CD8-positive, alpha-beta T cell (primary cell): ENCODE measurements at regions of chr17 and their contacts with region 1.

Region 1: DNA sequence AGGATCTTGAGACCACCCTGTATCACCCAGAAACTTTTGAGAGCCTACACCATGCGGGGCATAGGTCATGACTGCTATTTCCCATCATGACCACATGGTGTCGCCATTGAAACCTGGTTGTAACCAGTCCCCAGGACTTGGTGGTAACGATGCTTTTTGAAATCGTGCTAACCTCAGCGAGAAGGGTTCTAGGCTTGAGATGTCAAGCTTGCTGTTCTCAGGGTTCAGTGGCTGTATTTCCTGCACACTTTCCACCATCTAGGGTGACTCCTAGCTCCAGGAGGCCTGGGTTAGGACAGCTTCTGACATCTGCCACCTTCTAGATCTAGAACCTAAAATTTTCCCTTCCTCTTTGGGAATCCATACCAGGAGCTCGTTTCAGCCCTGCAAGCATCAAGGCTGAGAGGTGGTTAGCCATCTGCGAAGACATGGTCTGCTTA is 13.0 kb upstream of the SPNS3 start:
- DNase-seq: peak in 8 of 9 experiments; percentile 40 to 86 (median 59)
- ATAC-seq: peak; percentile 99
- H3K4me3 ChIP-seq: no peak overlapping the region
- H3K4me3 Mint-ChIP-seq: no peak overlapping the region
- H3K27ac ChIP-seq: no peak overlapping the region
- H3K27ac Mint-ChIP-seq: no peak overlapping the region
- H3K4me1 ChIP-seq: peaks cover 4% of the 10 kb centered on the region
- H3K4me1 Mint-ChIP-seq: peaks cover 3% of the 10 kb centered on the region
- H3K27me3 ChIP-seq: no peaks in the 10 kb centered on the region
- H3K27me3 Mint-ChIP-seq: no peaks in the 10 kb centered on the region
- CTCF ChIP-seq: peak; percentile 85

Region 2: DNA sequence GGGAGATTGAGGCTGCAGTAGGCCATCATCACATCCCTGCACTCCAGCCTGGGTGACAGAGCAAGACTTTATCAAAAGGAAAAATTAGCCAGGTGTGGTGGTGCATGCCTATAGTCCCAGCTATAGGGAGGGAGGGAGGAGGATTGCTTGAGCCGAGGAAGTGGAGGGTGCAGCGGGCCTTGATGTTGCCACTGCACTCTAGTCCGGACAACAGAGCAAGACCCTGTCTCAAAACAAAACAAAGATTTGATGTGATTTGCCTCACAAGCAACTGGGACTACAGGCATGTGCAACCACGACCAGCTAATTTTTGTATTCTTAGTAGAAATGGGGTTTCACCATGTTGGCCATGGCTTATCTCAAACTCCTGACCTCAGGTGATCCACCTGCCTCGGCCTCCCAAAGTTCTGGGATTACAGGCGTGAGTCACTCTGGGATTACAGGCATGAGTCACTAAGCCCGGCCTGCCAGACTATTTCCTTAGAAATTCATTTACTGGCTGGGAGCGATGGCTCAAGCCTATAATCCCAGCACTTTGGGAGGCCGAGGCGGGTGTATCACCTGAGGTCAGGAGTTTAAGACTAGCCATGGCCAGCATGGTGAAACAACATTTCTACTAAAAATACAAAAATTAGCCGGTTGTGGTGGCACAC is 65.7 kb before region 1 on chr17:
- CTCF ChIA-PET with region 1: no interaction called
- POLR2A ChIA-PET with region 1: no interaction called
- intact Hi-C with region 1: no loop called
- DNase-seq: no peak
- ATAC-seq: no peak
- H3K4me3 ChIP-seq: no peak overlapping the region
- H3K4me3 Mint-ChIP-seq: no peak overlapping the region
- H3K27ac ChIP-seq: no peak overlapping the region
- H3K27ac Mint-ChIP-seq: no peak overlapping the region
- H3K4me1 ChIP-seq: peaks cover 49% of the 10 kb centered on the region
- H3K4me1 Mint-ChIP-seq: peaks cover 58% of the 10 kb centered on the region
- H3K27me3 ChIP-seq: no peaks in the 10 kb centered on the region
- H3K27me3 Mint-ChIP-seq: no peaks in the 10 kb centered on the region
- CTCF ChIP-seq: no peak

Region 3: DNA sequence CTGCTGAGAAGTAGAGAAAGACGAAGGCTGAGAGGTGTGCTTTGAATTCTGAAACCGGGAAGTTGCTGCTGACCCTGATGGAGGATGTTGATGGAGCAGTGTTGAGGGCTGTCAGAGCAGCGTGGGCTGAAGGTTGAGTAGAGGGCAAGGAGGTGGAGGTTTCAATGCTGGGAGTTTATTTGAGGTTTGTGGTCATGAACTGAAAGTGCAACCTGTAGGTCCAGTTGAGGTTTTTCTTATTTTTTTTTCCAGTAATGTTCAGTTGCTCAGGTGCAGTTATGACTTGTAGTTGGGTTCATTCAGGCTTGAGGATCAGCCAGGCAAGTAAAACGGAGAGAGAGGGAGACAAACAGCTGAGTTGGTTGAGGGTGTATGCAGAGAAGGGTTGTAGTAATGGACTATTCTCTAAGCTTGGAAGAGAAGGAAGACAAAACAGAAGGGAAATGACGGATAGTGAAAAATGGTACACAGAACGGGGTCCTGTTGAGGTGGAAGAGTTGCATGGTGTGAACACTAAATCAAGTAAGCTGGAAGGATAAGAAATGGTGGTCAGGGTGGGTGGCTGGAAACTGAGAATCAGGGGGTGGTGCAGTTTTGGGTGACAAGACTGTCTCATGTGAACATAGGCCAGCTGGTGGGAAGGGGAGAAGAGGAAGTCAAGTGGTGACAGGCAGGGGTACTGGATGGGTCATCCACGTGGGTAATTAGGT is 45.5 kb before region 1 on chr17:
- CTCF ChIA-PET with region 1: no interaction called
- POLR2A ChIA-PET with region 1: no interaction called
- intact Hi-C with region 1: no loop called
- DNase-seq: peak in 4 of 9 experiments; percentile 3 to 77 (median 36)
- ATAC-seq: peak; percentile 71
- H3K4me3 ChIP-seq: no peak overlapping the region
- H3K4me3 Mint-ChIP-seq: peak overlapping the region; percentile 54
- H3K27ac ChIP-seq: peak overlapping the region in 1 of 2 experiments; percentile 47
- H3K27ac Mint-ChIP-seq: peak overlapping the region; percentile 77
- H3K4me1 ChIP-seq: peaks cover 9% of the 10 kb centered on the region
- H3K4me1 Mint-ChIP-seq: peaks cover 18% of the 10 kb centered on the region
- H3K27me3 ChIP-seq: no peaks in the 10 kb centered on the region
- H3K27me3 Mint-ChIP-seq: no peaks in the 10 kb centered on the region
- CTCF ChIP-seq: no peak

Region 4: DNA sequence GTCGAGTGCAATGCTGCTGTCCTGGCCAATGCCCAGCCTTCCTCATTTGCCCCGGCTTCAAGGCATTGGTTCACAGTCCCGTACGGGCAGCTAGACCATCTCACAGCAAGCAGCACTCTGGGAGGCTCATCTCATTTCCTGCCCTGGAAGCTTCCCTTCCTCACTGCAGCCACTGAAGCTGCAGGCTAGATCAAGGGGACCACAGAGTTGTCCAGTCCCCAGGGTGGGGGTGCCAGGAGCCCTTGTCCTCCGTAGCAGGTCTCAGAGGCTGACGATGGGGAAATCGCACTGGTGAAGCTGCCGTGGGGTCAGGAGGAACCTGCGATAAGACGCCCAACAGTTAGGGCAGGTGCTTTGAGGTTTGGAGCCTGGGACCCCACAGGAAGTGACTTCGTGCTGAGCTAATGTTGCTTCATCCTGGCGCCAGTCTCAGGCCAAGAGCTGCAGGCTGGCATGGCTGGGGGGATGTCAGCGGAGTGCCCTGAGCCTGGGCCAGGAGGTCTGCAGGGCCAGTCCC is 12.9 kb after region 1 on chr17 and contains the start of gene SPNS3:
- CTCF ChIA-PET with region 1: interaction called, 32 read pairs
- POLR2A ChIA-PET with region 1: interaction called, 3 read pairs
- intact Hi-C with region 1: no loop called
- DNase-seq: peak in 8 of 9 experiments; percentile 21 to 76 (median 42)
- ATAC-seq: peak; percentile 77
- H3K4me3 ChIP-seq: peak within 1 kb of the TSS; percentile 37 to 46
- H3K4me3 Mint-ChIP-seq: peak within 1 kb of the TSS; percentile 74
- H3K27ac ChIP-seq: peak within 1 kb of the TSS in 1 of 2 experiments; percentile 43
- H3K27ac Mint-ChIP-seq: peak within 1 kb of the TSS; percentile 84
- H3K4me1 ChIP-seq: peaks cover 25% of the 10 kb centered on the region
- H3K4me1 Mint-ChIP-seq: peaks cover 31% of the 10 kb centered on the region
- H3K27me3 ChIP-seq: peaks cover 0 to 4% of the 10 kb centered on the region in 2 experiments
- H3K27me3 Mint-ChIP-seq: no peaks in the 10 kb centered on the region
- CTCF ChIP-seq: no peak
- total RNA-seq, gene SPNS3: 3.4 TPM

Region 5: DNA sequence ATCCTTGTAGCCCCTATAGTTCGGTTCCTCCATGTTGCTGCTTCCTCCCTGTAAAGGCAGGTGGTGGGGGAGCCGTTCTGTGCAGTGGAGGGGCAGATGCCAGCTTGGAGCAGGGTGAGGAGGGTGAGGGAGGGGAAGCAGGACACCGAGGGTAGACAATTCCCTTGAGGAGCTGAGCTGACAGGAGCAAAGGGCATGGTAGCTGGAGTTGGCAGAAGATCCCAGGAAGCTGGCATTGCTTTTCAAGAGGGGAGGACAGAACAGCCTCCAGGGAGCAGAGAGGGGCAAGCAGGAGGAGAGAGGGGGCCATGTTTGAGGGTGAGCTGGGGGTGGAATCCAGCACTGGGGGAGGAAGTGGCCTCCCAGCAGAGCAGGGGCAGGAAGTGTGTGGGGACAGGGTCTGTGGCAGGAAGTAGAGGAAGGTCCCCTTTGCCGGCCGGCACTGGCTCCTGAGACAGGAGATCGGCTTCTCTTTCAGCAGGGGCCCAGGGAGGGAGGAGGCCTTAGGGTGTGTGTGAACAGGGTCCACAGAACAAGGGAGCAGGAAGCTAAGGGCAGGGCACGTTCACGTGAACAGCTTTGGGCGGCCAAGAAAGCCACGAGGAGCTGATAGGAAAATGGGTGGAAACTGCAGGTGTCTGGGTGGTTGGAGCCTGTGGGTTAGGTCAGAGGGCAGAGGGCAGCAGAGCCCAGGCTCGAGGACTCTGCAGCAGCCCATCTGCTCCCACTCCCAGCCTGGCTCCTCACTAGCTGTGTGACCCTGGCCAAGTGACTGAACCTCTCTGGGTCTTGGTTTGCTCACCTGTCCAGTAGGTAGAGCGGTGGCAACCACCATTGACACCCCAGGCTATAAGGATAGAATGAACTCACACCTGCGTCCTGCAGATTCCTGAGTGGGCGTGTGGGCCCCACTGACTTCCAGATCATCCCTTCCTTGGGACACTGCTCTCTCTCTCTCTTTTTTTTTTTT is 60.5 kb after region 1 on chr17:
- CTCF ChIA-PET with region 1: interaction called, 11 read pairs
- POLR2A ChIA-PET with region 1: no interaction called
- intact Hi-C with region 1: loop called in 1 of 2 experiments (anchors 10 kb)
- DNase-seq: peak in 8 of 9 experiments; percentile 18 to 76 (median 42)
- ATAC-seq: peak; percentile 77
- H3K4me3 ChIP-seq: peak overlapping the region; percentile 19 to 51
- H3K4me3 Mint-ChIP-seq: peak overlapping the region; percentile 81
- H3K27ac ChIP-seq: peak overlapping the region; percentile 40 to 77
- H3K27ac Mint-ChIP-seq: peak overlapping the region; percentile 95
- H3K4me1 ChIP-seq: peaks cover 56% of the 10 kb centered on the region
- H3K4me1 Mint-ChIP-seq: peaks cover 53% of the 10 kb centered on the region
- H3K27me3 ChIP-seq: no peaks in the 10 kb centered on the region
- H3K27me3 Mint-ChIP-seq: no peaks in the 10 kb centered on the region
- CTCF ChIP-seq: no peak

Region 6: GRCh38 chr17:4541328-4542002 is 120.8 kb after region 1 on chr17:
- CTCF ChIA-PET with region 1: interaction called, 6 read pairs
- POLR2A ChIA-PET with region 1: no interaction called
- intact Hi-C with region 1: loop called in 1 of 2 experiments (anchors 1 kb)
- DNase-seq: no peak
- ATAC-seq: no peak
- H3K4me3 ChIP-seq: no peak overlapping the region
- H3K4me3 Mint-ChIP-seq: no peak overlapping the region
- H3K27ac ChIP-seq: no peak overlapping the region
- H3K27ac Mint-ChIP-seq: no peak overlapping the region
- H3K4me1 ChIP-seq: no peaks in the 10 kb centered on the region
- H3K4me1 Mint-ChIP-seq: no peaks in the 10 kb centered on the region
- H3K27me3 ChIP-seq: no peaks in the 10 kb centered on the region
- H3K27me3 Mint-ChIP-seq: no peaks in the 10 kb centered on the region
- CTCF ChIP-seq: no peak

Region 7: GRCh38 chr17:4625181-4625617 is 204.5 kb after region 1 on chr17:
- CTCF ChIA-PET with region 1: interaction called, 65 read pairs
- POLR2A ChIA-PET with region 1: no interaction called
- intact Hi-C with region 1: loop called (anchors 1 kb)
- DNase-seq: no peak
- ATAC-seq: no peak
- H3K4me3 ChIP-seq: no peak overlapping the region
- H3K4me3 Mint-ChIP-seq: no peak overlapping the region
- H3K27ac ChIP-seq: no peak overlapping the region
- H3K27ac Mint-ChIP-seq: no peak overlapping the region
- H3K4me1 ChIP-seq: no peaks in the 10 kb centered on the region
- H3K4me1 Mint-ChIP-seq: no peaks in the 10 kb centered on the region
- H3K27me3 ChIP-seq: no peaks in the 10 kb centered on the region
- H3K27me3 Mint-ChIP-seq: peaks cover 6% of the 10 kb centered on the region
- CTCF ChIP-seq: no peak